CD8-positive, alpha-beta T cell (primary cell): ENCODE measurements at regions of chr19 and their contacts with region 1.

Region 1: DNA sequence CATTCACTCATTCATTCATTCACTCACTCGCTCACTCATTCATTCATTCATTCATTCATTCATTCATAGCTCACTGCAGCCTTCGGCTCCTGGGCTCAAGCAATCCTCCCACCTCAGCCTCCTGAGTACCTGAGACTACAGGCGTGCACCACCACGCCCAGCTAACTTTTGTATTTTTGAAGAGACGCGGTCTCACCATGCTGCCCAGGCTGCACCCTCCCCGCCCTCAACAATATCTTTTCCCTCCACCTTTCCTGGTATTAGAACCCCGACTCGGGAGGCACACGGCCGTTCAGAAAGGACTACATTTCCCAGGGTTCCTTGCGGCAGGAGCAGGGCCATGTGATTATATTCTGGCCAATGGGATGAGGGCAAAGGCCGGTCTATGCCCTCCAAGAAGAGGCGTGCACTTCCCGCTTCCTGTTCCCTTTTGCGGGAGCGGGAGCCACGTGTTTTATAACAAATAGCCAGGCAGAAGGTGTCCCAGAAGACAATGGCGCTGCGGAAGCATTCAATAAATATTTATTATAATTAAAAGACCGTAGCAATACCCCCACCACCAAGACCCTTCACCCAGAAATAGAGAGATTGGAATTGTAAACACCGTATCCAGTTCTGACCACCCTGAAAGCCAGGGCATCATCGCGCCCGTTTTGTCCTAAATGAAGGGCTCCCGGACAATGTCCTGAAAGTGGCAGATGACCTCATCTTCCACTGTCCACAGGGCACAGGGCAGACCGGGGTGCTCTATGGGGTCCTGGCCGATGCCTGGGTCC is 15.9 kb downstream of the TICAM1 start:
- DNase-seq: peak; percentile 45 to 89 (median 74)
- ATAC-seq: peak; percentile 83
- H3K4me3 ChIP-seq: peak overlapping the region; percentile 36
- H3K4me3 Mint-ChIP-seq: peak overlapping the region; percentile 69
- H3K27ac ChIP-seq: peak overlapping the region in 1 of 2 experiments; percentile 36
- H3K27ac Mint-ChIP-seq: peak overlapping the region; percentile 16
- H3K4me1 ChIP-seq: peaks cover 8% of the 10 kb centered on the region
- H3K4me1 Mint-ChIP-seq: peaks cover 11% of the 10 kb centered on the region
- H3K27me3 ChIP-seq: no peaks in the 10 kb centered on the region
- H3K27me3 Mint-ChIP-seq: no peaks in the 10 kb centered on the region
- CTCF ChIP-seq: no peak

Region 2: GRCh38 chr19:4803736-4804695 is 11.6 kb before region 1 on chr19:
- CTCF ChIA-PET with region 1: interaction called, 41 read pairs
- POLR2A ChIA-PET with region 1: no interaction called
- intact Hi-C with region 1: no loop called
- DNase-seq: peak in 8 of 9 experiments; percentile 43 to 83 (median 70)
- ATAC-seq: peak; percentile 99
- H3K4me3 ChIP-seq: no peak overlapping the region
- H3K4me3 Mint-ChIP-seq: no peak overlapping the region
- H3K27ac ChIP-seq: no peak overlapping the region
- H3K27ac Mint-ChIP-seq: no peak overlapping the region
- H3K4me1 ChIP-seq: no peaks in the 10 kb centered on the region
- H3K4me1 Mint-ChIP-seq: no peaks in the 10 kb centered on the region
- H3K27me3 ChIP-seq: no peaks in the 10 kb centered on the region
- H3K27me3 Mint-ChIP-seq: no peaks in the 10 kb centered on the region
- CTCF ChIP-seq: peak; percentile 67

Region 3: DNA sequence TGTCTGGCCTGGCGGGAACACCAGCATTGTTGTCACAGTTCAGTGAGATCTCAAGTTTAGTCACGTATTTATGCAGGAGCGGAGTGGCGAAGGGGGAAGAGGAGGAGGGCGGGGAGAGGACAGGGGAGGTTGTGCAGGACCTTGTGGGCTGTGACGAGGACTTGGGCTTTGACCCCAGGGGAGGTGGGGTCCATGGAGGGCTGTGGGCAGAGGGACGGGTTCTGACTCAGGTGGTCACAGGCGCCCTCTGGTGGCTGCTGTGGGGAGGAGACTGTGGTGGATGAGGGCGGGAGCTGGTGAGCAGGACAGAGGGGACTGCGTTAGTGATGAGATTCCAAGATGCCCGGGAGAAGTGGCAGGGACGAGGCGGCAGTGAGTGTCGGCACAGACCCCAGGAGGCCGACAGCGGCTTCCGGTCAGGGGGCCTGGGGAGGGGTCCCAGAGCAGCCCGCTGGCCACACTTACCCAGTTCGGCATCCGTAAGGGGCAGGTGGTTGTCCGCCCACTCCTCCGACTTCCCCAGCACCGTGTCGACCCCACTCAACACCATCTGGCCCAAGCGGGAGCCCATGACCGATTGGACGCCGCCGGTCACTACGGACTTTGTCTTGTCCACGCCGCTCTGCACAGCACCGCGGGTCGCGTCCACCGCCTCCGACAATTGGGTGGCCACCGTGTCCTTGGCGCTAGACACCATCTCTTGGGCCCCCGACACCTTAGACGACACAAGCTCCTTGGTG is 36.1 kb after region 1 on chr19:
- CTCF ChIA-PET with region 1: interaction called, 360 read pairs
- POLR2A ChIA-PET with region 1: no interaction called
- intact Hi-C with region 1: no loop called
- DNase-seq: peak; percentile 58 to 88 (median 75)
- ATAC-seq: peak; percentile 91
- H3K4me3 ChIP-seq: no peak overlapping the region
- H3K4me3 Mint-ChIP-seq: no peak overlapping the region
- H3K27ac ChIP-seq: no peak overlapping the region
- H3K27ac Mint-ChIP-seq: no peak overlapping the region
- H3K4me1 ChIP-seq: no peaks in the 10 kb centered on the region
- H3K4me1 Mint-ChIP-seq: no peaks in the 10 kb centered on the region
- H3K27me3 ChIP-seq: no peaks in the 10 kb centered on the region
- H3K27me3 Mint-ChIP-seq: no peaks in the 10 kb centered on the region
- CTCF ChIP-seq: peak; percentile 73

Region 4: DNA sequence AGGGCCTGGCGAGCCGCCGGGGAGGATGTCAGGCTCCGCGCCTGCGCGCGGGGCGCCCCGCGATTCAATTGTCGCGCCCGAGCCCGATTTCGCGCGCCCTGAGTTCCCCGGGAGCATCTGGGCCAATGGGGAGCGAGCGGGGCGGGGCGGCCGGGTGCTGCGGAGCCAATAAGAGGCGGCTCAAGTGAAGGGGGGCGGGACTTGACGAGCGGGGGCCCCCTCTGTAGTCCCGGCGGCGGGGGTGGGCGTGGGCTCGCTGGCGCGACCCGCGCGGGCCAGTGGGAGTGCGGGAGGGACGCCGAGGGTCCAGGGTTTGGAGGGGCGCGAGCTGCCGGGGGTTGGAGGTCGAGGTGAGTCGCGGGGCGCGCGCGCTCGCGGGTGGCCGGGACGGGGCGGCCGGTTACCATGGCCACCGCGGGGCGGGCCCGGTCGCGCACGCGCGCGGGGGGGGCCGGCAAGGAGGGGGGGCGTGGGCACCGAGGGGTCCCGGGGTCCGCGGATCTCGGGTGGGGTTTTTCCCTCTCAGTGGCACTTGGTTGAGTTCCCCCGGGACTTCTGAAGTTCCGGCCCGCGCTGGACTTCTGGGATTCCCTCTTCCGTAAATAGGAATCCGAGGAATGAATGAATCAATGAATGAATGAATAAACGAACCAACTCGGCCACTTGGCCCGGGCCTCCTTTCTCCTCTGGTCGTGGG is 94.4 kb after region 1 on chr19:
- CTCF ChIA-PET with region 1: interaction called, 45 read pairs
- POLR2A ChIA-PET with region 1: no interaction called
- intact Hi-C with region 1: loop called (anchors 1 kb)
- DNase-seq: peak; percentile 85 to 96 (median 93)
- ATAC-seq: peak; percentile 82
- H3K4me3 ChIP-seq: peak overlapping the region; percentile 44 to 62
- H3K4me3 Mint-ChIP-seq: peak overlapping the region; percentile 99
- H3K27ac ChIP-seq: no peak overlapping the region
- H3K27ac Mint-ChIP-seq: no peak overlapping the region
- H3K4me1 ChIP-seq: peaks cover 57% of the 10 kb centered on the region
- H3K4me1 Mint-ChIP-seq: peaks cover 66% of the 10 kb centered on the region
- H3K27me3 ChIP-seq: no peaks in the 10 kb centered on the region
- H3K27me3 Mint-ChIP-seq: no peaks in the 10 kb centered on the region
- CTCF ChIP-seq: no peak

Region 5: GRCh38 chr19:4968462-4969291 is 153.1 kb after region 1 on chr19 and contains the start of gene KDM4B:
- CTCF ChIA-PET with region 1: no interaction called
- POLR2A ChIA-PET with region 1: interaction called, 3 read pairs
- intact Hi-C with region 1: loop called in 1 of 2 experiments (anchors 5 kb)
- DNase-seq: peak; percentile 96 to 100 (median 99)
- ATAC-seq: peak; percentile 87
- H3K4me3 ChIP-seq: peak within 1 kb of the TSS; percentile 54 to 57
- H3K4me3 Mint-ChIP-seq: peak within 1 kb of the TSS; percentile 87
- H3K27ac ChIP-seq: peak within 1 kb of the TSS; percentile 33 to 60
- H3K27ac Mint-ChIP-seq: peak within 1 kb of the TSS; percentile 81
- H3K4me1 ChIP-seq: peaks cover 30% of the 10 kb centered on the region
- H3K4me1 Mint-ChIP-seq: peaks cover 30% of the 10 kb centered on the region
- H3K27me3 ChIP-seq: no peaks in the 10 kb centered on the region
- H3K27me3 Mint-ChIP-seq: no peaks in the 10 kb centered on the region
- CTCF ChIP-seq: no peak
- total RNA-seq, gene KDM4B: 111 to 121 TPM

Region 6: DNA sequence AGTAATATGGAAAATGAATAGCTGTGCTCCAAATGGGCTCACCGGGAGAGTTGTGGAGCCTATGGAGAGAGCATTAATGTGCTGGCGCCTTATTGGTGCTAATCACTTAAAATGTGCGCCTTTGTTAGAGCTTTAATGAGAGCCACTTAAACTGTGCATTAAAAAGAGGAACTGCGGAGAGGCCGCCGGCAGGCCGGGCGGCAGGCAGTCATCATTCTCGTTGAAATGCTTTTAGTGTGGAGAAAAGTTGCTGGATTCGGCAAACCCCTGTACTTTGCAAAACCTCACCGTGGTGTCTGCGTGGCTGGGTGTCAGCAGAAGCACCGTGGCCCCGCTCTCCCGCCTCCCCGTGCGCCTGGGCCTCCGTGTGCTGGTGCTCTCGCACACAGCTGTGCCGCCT is 258.8 kb after region 1 on chr19:
- CTCF ChIA-PET with region 1: no interaction called
- POLR2A ChIA-PET with region 1: no interaction called
- intact Hi-C with region 1: no loop called
- DNase-seq: no peak
- ATAC-seq: no peak
- H3K4me3 ChIP-seq: no peak overlapping the region
- H3K4me3 Mint-ChIP-seq: peak overlapping the region; percentile 3
- H3K27ac ChIP-seq: no peak overlapping the region
- H3K27ac Mint-ChIP-seq: no peak overlapping the region
- H3K4me1 ChIP-seq: peaks cover 19% of the 10 kb centered on the region
- H3K4me1 Mint-ChIP-seq: peaks cover 36% of the 10 kb centered on the region
- H3K27me3 ChIP-seq: no peaks in the 10 kb centered on the region
- H3K27me3 Mint-ChIP-seq: no peaks in the 10 kb centered on the region
- CTCF ChIP-seq: no peak